ENCODE measurements at regions of chr1 and their contacts with region 1.

Region 1: GRCh38 chr1:225999227-225999911 is at the start of gene SDE2:
- DNase-seq: peak; percentile 100
- ATAC-seq: peak; percentile 90
- H3K4me3 Mint-ChIP-seq: peak within 1 kb of the TSS; percentile 89
- H3K27ac Mint-ChIP-seq: peak within 1 kb of the TSS; percentile 100
- H3K4me1 Mint-ChIP-seq: peaks cover 69% of the 10 kb centered on the region
- H3K27me3 Mint-ChIP-seq: no peaks in the 10 kb centered on the region
- total RNA-seq, gene SDE2: 13.5 to 15.0 TPM

Region 2: GRCh38 chr1:224434691-224435317 is 1564.6 kb before region 1 on chr1 and contains the start of gene WDR26:
- CTCF ChIA-PET with region 1: no interaction called
- POLR2A ChIA-PET with region 1: no interaction called
- intact Hi-C with region 1: loop called in 1 of 2 experiments (anchors 5 kb)
- DNase-seq: peak; percentile 92
- ATAC-seq: peak; percentile 85
- H3K4me3 Mint-ChIP-seq: peak within 1 kb of the TSS; percentile 81
- H3K27ac Mint-ChIP-seq: peak within 1 kb of the TSS; percentile 97
- H3K4me1 Mint-ChIP-seq: peaks cover 52% of the 10 kb centered on the region
- H3K27me3 Mint-ChIP-seq: no peaks in the 10 kb centered on the region
- total RNA-seq, gene WDR26: 74.0 to 75.6 TPM

Region 3: DNA sequence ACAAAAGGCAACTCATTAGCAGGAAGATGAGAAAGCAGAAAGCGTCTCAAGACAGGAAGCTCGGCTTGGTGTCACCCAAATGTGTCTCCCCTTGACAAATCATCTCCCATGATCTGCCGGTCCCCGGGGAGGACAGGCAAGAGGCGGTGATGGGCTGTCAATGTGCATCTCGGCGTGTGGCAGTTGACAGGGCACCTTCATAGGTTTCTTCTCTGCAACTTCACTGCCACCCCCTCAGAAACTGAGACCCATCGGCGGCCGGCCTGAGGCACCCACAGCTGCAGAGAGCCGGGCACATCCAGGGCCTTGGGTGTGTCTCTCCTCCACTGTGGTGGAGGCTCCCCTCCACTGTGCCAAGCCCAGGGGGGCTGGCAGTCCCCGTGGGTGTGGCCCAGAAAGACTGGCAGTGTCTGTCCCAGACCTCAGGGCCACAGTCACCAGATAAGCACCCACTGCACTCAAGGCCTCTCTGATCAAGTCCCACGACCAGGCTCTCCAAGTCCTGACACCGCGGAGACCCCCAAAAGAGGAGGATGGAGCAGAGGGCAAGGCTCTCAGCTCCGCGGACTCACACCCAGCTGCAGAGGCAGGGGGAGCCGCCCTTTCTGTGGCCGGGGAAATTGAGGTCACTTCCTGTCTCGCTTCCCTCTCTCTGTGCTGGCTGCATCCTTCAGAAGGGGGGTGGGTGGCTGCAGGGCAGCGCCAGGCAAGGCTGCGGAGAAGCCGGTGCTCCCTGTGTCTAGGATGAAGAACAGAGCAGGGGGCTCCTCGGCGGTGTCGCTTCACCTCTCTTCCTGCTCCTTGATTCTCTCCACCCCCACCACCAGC is 532.0 kb before region 1 on chr1:
- CTCF ChIA-PET with region 1: no interaction called
- POLR2A ChIA-PET with region 1: no interaction called
- intact Hi-C with region 1: loop called in 1 of 2 experiments (anchors 1 kb)
- DNase-seq: peak; percentile 90
- ATAC-seq: peak; percentile 90
- H3K4me3 Mint-ChIP-seq: peak overlapping the region; percentile 85
- H3K27ac Mint-ChIP-seq: peak overlapping the region; percentile 98
- H3K4me1 Mint-ChIP-seq: peaks cover 25% of the 10 kb centered on the region
- H3K27me3 Mint-ChIP-seq: no peaks in the 10 kb centered on the region

Region 4: DNA sequence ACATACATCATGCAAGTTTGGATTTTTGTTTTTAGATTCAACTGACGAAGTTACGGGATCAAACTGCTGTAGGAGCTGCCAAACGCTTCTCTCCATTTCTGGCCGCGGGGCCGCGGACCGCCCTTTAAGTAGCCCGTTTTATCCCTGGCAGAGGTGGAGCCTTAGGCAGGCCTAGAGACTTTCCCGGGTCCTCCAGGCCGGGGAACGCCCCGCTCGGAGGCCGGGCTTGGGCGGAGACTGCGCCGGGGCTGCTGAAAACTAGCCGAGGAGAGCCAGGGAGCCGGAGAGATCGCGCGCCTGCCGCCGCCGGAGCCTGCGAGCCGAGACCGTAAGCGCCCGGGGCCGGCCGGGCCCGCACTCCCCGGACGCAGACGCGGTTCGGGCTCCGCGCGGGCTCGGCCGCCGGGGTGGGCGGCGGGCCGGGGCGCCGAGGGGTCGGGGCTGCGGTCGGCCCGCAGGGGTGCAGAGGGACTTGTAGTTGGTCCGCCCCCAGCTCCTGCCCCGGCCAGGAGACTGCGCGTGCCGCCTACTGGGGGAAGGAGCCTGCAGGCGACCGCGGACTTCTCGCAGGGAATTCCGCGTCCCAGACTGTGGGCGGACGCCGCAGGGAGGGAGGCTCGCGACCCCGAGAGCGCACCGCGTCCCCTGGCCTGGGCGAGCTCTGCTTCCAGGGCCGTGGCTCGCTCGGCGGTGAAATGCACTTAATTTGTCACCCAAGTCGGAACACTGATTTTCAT is 189.4 kb before region 1 on chr1 and contains the start of gene EPHX1:
- CTCF ChIA-PET with region 1: no interaction called
- POLR2A ChIA-PET with region 1: no interaction called
- intact Hi-C with region 1: no loop called
- DNase-seq: peak; percentile 84
- ATAC-seq: peak; percentile 98
- H3K4me3 Mint-ChIP-seq: peak within 1 kb of the TSS; percentile 75
- H3K27ac Mint-ChIP-seq: no peak within 1 kb of the TSS
- H3K4me1 Mint-ChIP-seq: peaks cover 8% of the 10 kb centered on the region
- H3K27me3 Mint-ChIP-seq: peaks cover 4% of the 10 kb centered on the region
- total RNA-seq, gene EPHX1: 2.5 to 2.6 TPM

Region 5: GRCh38 chr1:225923692-225924555 is 75.4 kb before region 1 on chr1 and contains the start of gene PYCR2:
- CTCF ChIA-PET with region 1: no interaction called
- POLR2A ChIA-PET with region 1: no interaction called
- intact Hi-C with region 1: loop called in 1 of 2 experiments (anchors 1 kb)
- DNase-seq: peak; percentile 97
- ATAC-seq: peak; percentile 97
- H3K4me3 Mint-ChIP-seq: peak within 1 kb of the TSS; percentile 93
- H3K27ac Mint-ChIP-seq: peak within 1 kb of the TSS; percentile 96
- H3K4me1 Mint-ChIP-seq: peaks cover 54% of the 10 kb centered on the region
- H3K27me3 Mint-ChIP-seq: no peaks in the 10 kb centered on the region
- total RNA-seq, gene PYCR2: 106 to 126 TPM

Region 6: DNA sequence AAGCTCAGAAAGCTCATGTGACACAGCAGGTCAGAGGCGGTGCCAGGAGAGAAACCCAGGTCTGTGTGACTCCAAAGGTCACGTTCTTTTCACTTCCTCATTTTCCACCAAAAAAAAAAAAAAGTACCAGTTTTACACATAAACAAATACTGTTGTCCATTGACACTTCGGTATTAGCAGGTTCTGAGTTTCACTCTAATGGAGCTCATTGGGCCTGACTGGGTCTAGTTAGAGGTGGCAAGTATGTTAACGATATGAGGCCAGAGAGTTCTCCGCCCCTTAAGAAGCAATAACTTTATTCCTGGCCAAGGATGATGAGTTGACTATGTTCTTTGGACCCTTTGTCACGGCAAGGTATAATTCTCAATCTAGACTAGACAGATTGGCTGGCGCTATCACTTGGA is 29.7 kb after region 1 on chr1:
- CTCF ChIA-PET with region 1: no interaction called
- POLR2A ChIA-PET with region 1: no interaction called
- intact Hi-C with region 1: no loop called
- DNase-seq: no peak
- ATAC-seq: no peak
- H3K4me3 Mint-ChIP-seq: no peak overlapping the region
- H3K27ac Mint-ChIP-seq: no peak overlapping the region
- H3K4me1 Mint-ChIP-seq: no peaks in the 10 kb centered on the region
- H3K27me3 Mint-ChIP-seq: no peaks in the 10 kb centered on the region

Region 7: DNA sequence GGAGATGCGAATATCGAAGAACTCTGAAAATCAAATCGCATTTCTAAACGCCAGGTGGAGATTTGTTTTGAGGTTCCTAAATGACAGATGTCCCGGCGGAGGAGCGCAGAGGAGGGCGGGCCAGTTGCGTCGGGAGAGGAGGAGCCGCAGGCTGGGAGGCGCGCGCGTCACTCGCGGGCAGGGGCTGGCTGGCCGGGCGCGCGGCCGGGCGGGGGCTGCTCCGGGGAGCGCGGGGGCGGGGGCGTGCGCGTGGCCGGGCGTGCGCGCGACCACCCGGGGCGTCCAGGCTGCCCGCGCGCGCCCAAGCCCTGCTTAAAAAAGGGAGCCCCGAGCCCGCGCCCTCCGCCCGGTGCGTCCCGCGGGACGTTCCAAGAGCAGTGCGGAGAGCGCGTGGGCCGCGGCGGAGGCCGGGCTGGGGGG is 110.5 kb after region 1 on chr1:
- CTCF ChIA-PET with region 1: no interaction called
- POLR2A ChIA-PET with region 1: interaction called, 3 read pairs
- intact Hi-C with region 1: loop called in 1 of 2 experiments (anchors 1 kb)
- DNase-seq: peak; percentile 90
- ATAC-seq: peak; percentile 90
- H3K4me3 Mint-ChIP-seq: peak overlapping the region; percentile 81
- H3K27ac Mint-ChIP-seq: peak overlapping the region; percentile 59
- H3K4me1 Mint-ChIP-seq: peaks cover 9% of the 10 kb centered on the region
- H3K27me3 Mint-ChIP-seq: no peaks in the 10 kb centered on the region

Region 8: DNA sequence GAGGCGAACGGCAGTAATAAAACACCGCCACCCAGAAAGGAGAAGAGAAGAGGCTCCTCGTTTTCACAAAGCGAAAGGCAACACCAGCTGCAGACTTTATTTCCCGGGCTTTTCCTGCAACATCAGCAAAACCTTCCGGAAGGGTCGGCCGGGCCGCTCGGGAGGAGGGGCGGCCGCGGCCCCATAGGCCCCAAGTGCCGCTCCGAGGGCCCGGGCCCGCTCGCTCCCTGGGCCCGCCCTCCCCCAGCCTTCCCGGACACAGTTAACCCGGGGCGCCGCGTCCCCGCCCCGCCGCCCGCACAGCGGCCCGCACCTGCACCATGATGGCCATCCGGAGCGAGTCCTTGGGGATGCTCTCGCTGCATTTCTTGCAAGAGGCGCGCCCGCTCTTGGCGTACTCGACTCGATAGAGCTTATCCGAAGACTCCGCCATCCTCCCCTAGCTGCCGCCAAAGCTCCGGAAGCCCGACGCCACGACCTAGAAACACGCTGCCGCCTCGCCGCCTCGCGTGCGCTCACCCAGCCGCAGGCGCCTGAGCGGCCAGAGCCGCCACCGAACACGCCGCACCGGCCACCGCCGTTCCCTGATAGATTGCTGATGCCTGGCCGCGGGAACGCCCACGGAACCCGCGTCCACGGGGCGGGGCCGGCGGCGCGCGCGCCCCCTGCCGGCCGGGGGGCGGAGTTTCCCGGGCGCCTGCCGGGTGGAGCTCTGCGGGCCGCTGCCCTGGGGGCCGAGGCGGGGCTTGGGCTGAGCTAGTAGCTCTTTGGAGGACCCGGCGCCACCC is 408.3 kb after region 1 on chr1 and contains the start of gene PARP1:
- CTCF ChIA-PET with region 1: no interaction called
- POLR2A ChIA-PET with region 1: no interaction called
- intact Hi-C with region 1: loop called in 1 of 2 experiments (anchors 2 kb)
- DNase-seq: peak; percentile 93
- ATAC-seq: peak; percentile 94
- H3K4me3 Mint-ChIP-seq: peak within 1 kb of the TSS; percentile 88
- H3K27ac Mint-ChIP-seq: peak within 1 kb of the TSS; percentile 94
- H3K4me1 Mint-ChIP-seq: peaks cover 42% of the 10 kb centered on the region
- H3K27me3 Mint-ChIP-seq: no peaks in the 10 kb centered on the region
- total RNA-seq, gene PARP1: 237 to 242 TPM

Measured in activated CD4-positive, alpha-beta T cell treated with anti-CD3 and anti-CD28 coated beads for 36 hours (primary cell).